ENCODE measurements at regions of chr12 and their contacts with region 1.

Region 1: DNA sequence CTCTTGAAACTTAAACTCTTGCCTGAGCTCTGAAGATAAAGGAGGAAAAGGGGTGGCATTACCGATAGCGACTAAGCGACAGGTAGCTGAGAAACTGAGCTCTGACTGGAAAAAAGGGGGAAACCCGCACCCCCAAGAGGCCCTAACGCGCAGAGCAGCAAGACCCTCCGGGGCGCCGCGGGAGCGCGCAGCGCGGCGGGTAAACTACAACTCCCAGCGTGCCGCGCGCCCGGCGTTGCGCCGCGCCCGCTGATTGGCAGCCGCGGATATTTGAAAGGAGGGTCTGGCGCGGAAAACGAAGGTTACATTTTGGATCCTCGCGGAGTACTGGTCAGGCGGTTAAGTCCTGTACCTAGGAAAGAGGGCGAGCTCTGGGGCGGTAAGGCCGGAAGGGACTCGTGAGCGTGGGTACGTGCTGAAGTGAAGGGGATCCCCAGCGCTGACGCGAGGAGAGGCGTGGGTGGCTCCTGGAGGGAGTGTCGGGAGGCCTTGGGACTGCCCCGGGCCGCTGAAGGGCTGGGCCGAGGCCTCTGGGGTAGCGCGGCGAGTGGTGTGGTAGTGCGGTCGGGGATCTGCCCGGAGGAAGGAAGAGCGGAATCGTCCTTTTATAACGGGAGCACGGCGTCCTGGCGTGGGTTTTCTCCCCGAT is at the start of gene ESPL1:
- DNase-seq: peak; percentile 92
- ATAC-seq: peak; percentile 92
- H3K4me3 Mint-ChIP-seq: peak within 1 kb of the TSS; percentile 99
- H3K27ac Mint-ChIP-seq: peak within 1 kb of the TSS; percentile 97
- H3K4me1 Mint-ChIP-seq: peaks cover 41% of the 10 kb centered on the region
- H3K27me3 Mint-ChIP-seq: no peaks in the 10 kb centered on the region
- total RNA-seq, gene ESPL1: 90.5 to 91.0 TPM

Region 2: GRCh38 chr12:53205747-53206419 is 62.2 kb before region 1 on chr12:
- POLR2A ChIA-PET with region 1: interaction called, 12 read pairs
- DNase-seq: peak; percentile 77
- ATAC-seq: peak; percentile 69
- H3K4me3 Mint-ChIP-seq: peak overlapping the region; percentile 92
- H3K27ac Mint-ChIP-seq: peak overlapping the region; percentile 92
- H3K4me1 Mint-ChIP-seq: peaks cover 50% of the 10 kb centered on the region
- H3K27me3 Mint-ChIP-seq: no peaks in the 10 kb centered on the region

Region 3: DNA sequence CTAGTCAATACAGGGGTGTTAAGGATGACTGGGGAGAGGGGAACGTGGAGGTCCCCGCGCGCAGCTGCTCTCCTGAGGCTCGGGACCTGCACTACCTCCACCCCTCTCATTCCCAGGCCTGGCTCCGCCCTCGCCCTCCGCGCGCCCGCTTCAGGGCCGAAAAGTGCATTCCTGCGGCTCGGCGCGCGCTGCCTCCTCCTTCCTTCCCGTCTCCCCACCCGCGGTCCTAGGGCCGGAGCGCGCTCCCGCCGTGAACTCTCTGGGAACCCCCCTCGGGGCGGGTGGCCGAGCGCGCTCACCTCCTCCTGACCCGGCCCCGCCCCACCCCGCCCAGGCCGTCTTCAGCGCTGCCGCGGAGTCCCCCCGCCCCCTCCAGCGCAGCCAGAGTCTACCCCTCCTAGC is 47.3 kb before region 1 on chr12:
- POLR2A ChIA-PET with region 1: interaction called, 48 read pairs
- DNase-seq: peak; percentile 87
- ATAC-seq: peak; percentile 62
- H3K4me3 Mint-ChIP-seq: peak overlapping the region; percentile 89
- H3K27ac Mint-ChIP-seq: peak overlapping the region; percentile 96
- H3K4me1 Mint-ChIP-seq: peaks cover 69% of the 10 kb centered on the region
- H3K27me3 Mint-ChIP-seq: no peaks in the 10 kb centered on the region

Region 4: GRCh38 chr12:53279283-53279869 is 11.3 kb after region 1 on chr12:
- POLR2A ChIA-PET with region 1: interaction called, 19 read pairs
- DNase-seq: no peak
- ATAC-seq: no peak
- H3K4me3 Mint-ChIP-seq: no peak overlapping the region
- H3K27ac Mint-ChIP-seq: no peak overlapping the region
- H3K4me1 Mint-ChIP-seq: peaks cover 11% of the 10 kb centered on the region
- H3K27me3 Mint-ChIP-seq: no peaks in the 10 kb centered on the region

Measured in activated naive CD8-positive, alpha-beta T cell treated with anti-CD3 and anti-CD28 coated beads, Interleukin-2, amount 10 ng/mL, durations not matched to agents 7 days and 5 days (primary cell).